ENCODE measurements at regions of chr3 and their contacts with region 1.

Region 1: DNA sequence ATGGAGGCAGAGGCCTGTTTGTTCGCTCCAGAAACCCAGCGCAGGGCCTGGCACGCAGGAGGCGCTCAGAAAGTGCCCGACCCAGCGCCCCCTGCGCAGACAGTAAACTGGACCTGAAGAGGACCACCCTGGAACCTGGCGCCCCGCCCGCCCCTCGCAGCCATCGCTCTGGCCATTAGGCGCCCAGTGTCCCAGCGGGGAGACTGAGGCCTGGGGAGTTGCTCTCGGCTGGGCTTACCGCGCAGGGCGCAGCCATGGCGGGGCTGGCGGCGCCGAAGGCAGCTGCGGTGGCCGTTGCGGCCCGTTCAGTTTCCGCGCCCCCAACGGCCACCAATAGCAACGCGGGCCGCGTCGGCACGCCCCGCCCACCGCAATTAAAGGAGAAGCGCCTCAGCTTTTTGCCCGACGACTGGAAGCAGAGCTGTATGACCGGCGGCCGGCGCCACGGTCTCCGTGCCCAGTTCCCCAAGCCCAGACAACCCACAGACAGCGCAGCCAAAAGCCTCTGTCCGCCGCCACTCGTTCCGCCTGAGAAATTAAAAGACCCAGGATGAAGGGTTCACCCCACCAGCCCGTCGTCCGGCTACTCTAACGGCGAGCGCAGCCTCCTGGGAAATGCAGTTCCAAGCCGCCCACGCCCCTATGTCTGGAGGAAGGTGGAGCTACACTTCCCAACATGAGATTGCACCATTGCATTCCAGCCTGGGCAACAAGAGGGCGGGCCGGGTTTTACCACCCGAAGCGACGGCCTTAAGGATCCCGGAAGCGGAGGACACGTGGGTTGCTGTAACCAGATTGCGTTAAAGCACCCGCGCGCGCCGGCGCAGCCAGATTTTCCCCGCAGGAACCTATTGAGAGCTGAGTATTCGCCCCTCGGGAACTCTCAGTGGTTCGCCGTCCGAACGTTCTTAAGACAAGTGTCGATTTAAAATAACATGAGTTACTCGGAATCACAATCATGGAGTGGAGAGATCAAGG is at the start of gene POC1A:
- DNase-seq: peak; percentile 84
- ATAC-seq: peak; percentile 87
- H3K4me3 Mint-ChIP-seq: peak within 1 kb of the TSS; percentile 96
- H3K27ac Mint-ChIP-seq: peak within 1 kb of the TSS; percentile 97
- H3K4me1 Mint-ChIP-seq: peaks cover 13% of the 10 kb centered on the region
- H3K27me3 Mint-ChIP-seq: no peaks in the 10 kb centered on the region
- CTCF ChIP-seq: no peak
- total RNA-seq, gene POC1A: 2.3 and 2.4 TPM in 2 replicates

Region 2: GRCh38 chr3:51974963-51975851 is 179.2 kb before region 1 on chr3 and contains the start of gene ABHD14A:
- CTCF ChIA-PET with region 1: interaction called, 4 read pairs
- POLR2A ChIA-PET with region 1: interaction called, 10 read pairs
- intact Hi-C with region 1: no loop called
- DNase-seq: peak; percentile 74
- ATAC-seq: peak; percentile 76
- H3K4me3 Mint-ChIP-seq: peak within 1 kb of the TSS; percentile 98
- H3K27ac Mint-ChIP-seq: peak within 1 kb of the TSS; percentile 91
- H3K4me1 Mint-ChIP-seq: peaks cover 28% of the 10 kb centered on the region
- H3K27me3 Mint-ChIP-seq: no peaks in the 10 kb centered on the region
- CTCF ChIP-seq: no peak
- total RNA-seq, gene ABHD14A: 5.1 and 5.2 TPM in 2 replicates

Region 3: GRCh38 chr3:51995346-51996163 is 158.9 kb before region 1 on chr3 and contains the start of gene RPL29:
- CTCF ChIA-PET with region 1: no interaction called
- POLR2A ChIA-PET with region 1: interaction called, 31 read pairs
- intact Hi-C with region 1: no loop called
- DNase-seq: peak; percentile 84
- ATAC-seq: peak; percentile 98
- H3K4me3 Mint-ChIP-seq: peak within 1 kb of the TSS; percentile 100
- H3K27ac Mint-ChIP-seq: peak within 1 kb of the TSS; percentile 100
- H3K4me1 Mint-ChIP-seq: peaks cover 37% of the 10 kb centered on the region
- H3K27me3 Mint-ChIP-seq: no peaks in the 10 kb centered on the region
- CTCF ChIP-seq: no peak
- total RNA-seq, gene RPL29: 1,884 and 2,140 TPM in 2 replicates

Region 4: GRCh38 chr3:52041118-52041731 is 113.2 kb before region 1 on chr3:
- CTCF ChIA-PET with region 1: no interaction called
- POLR2A ChIA-PET with region 1: no interaction called
- intact Hi-C with region 1: no loop called
- DNase-seq: no peak
- ATAC-seq: no peak
- H3K4me3 Mint-ChIP-seq: no peak overlapping the region
- H3K27ac Mint-ChIP-seq: no peak overlapping the region
- H3K4me1 Mint-ChIP-seq: peaks cover under 1% of the 10 kb centered on the region
- H3K27me3 Mint-ChIP-seq: peaks cover 2% of the 10 kb centered on the region
- CTCF ChIP-seq: no peak

Region 5: DNA sequence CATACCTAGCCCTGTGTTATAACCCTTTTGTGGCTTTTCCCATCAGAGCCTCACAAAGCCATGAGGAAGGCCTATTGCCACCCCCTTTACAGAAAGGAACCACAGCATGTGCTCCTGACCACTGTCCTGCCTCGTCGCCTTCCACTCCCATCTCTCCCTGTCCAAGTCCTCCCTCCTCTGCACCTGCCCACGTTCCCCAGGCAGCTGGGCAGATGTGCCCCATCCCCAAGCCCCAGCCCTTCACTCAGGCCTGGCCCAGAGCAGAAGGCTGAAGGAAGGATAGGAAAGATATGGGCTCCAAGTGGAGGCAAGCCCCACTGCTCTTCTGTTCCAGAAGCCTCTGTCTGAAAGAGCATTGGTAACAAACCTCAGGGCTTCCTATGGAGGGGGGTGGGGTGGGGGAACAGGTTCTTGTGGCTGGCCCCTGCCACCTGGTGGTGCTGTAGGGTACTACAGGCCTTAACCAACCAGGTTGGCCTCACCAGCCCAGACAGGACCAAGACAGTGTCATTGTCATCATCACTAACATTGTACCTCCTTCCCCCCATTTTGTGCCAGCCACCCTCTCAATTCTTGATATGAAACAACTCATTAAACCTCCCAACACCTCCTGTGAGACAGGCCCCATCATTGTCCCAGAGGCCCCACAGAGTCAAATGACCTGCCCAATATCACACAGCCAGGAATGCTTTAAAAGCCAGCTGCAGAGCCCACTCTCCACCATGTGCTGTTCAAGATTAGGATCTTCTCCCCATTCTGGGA is 10.2 kb before region 1 on chr3:
- CTCF ChIA-PET with region 1: interaction called, 4 read pairs
- POLR2A ChIA-PET with region 1: interaction called, 10 read pairs
- intact Hi-C with region 1: no loop called
- DNase-seq: peak; percentile 73
- ATAC-seq: peak; percentile 100
- H3K4me3 Mint-ChIP-seq: no peak overlapping the region
- H3K27ac Mint-ChIP-seq: no peak overlapping the region
- H3K4me1 Mint-ChIP-seq: peaks cover 4% of the 10 kb centered on the region
- H3K27me3 Mint-ChIP-seq: no peaks in the 10 kb centered on the region
- CTCF ChIP-seq: peak; percentile 66

Region 6: GRCh38 chr3:52197842-52198668 is 43.6 kb after region 1 on chr3 and contains the start of gene ALAS1:
- CTCF ChIA-PET with region 1: no interaction called
- POLR2A ChIA-PET with region 1: interaction called, 5 read pairs
- intact Hi-C with region 1: loop called (anchors 1 kb)
- DNase-seq: peak; percentile 98
- ATAC-seq: peak; percentile 96
- H3K4me3 Mint-ChIP-seq: peak within 1 kb of the TSS; percentile 97
- H3K27ac Mint-ChIP-seq: peak within 1 kb of the TSS; percentile 87
- H3K4me1 Mint-ChIP-seq: peaks cover 38% of the 10 kb centered on the region
- H3K27me3 Mint-ChIP-seq: no peaks in the 10 kb centered on the region
- CTCF ChIP-seq: no peak
- total RNA-seq, gene ALAS1: 25.9 and 27.6 TPM in 2 replicates

Measured in activated B cell treated with CpG ODN at 0.5 μM for 24 hours (primary cell).